ENCODE measurements at regions of chr9 and their contacts with region 1.

Region 1: DNA sequence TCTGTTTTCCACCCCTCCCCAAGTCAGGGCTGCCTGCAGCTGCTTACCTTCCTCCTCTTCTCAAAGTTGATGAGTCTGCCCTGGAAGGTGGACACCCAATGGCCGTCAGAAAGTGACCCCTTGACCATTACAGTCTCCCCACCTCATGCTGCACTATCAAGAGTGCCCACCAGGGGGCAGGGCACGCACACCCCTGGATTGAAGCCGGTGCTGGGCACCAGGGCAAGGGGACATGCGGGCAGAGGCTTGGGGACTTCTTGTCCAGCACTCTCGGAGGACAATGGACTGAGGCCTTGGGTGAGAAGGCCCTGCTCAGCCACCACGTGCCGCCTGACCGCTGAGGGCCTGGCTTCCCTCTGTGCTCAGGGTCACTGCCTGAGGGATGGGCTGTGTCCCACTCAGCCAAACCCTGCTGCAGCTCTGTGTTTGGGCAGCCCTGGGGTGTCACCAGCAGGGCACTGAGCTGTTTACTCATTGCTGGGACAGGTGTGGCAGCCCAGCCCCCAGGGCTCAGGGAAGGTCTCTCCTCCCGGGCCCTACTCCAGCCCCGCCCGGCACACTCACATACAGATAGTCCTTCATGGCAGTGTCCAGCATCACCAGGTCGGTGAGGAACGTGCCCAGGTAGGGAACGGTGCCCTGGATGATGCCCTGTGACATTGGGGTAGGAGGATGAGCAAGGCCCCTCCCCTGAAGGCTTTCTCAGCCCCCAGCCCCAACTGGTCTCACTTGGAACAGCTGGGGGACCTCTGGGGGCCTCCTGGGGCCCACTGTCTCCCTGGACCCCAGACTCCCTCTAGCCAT is 17.7 kb downstream of the RALGDS start:
- DNase-seq: peak; percentile 67
- H3K4me3 Mint-ChIP-seq: no peak overlapping the region
- H3K27ac Mint-ChIP-seq: peak overlapping the region; percentile 54
- H3K4me1 Mint-ChIP-seq: peaks cover 4% of the 10 kb centered on the region
- H3K27me3 Mint-ChIP-seq: no peaks in the 10 kb centered on the region

Region 2: GRCh38 chr9:133115448-133116345 is 12.3 kb after region 1 on chr9:
- CTCF ChIA-PET with region 1: interaction called, 24 read pairs
- DNase-seq: peak; percentile 54
- H3K4me3 Mint-ChIP-seq: no peak overlapping the region
- H3K27ac Mint-ChIP-seq: peak overlapping the region; percentile 77
- H3K4me1 Mint-ChIP-seq: peaks cover 74% of the 10 kb centered on the region
- H3K27me3 Mint-ChIP-seq: no peaks in the 10 kb centered on the region

Region 3: DNA sequence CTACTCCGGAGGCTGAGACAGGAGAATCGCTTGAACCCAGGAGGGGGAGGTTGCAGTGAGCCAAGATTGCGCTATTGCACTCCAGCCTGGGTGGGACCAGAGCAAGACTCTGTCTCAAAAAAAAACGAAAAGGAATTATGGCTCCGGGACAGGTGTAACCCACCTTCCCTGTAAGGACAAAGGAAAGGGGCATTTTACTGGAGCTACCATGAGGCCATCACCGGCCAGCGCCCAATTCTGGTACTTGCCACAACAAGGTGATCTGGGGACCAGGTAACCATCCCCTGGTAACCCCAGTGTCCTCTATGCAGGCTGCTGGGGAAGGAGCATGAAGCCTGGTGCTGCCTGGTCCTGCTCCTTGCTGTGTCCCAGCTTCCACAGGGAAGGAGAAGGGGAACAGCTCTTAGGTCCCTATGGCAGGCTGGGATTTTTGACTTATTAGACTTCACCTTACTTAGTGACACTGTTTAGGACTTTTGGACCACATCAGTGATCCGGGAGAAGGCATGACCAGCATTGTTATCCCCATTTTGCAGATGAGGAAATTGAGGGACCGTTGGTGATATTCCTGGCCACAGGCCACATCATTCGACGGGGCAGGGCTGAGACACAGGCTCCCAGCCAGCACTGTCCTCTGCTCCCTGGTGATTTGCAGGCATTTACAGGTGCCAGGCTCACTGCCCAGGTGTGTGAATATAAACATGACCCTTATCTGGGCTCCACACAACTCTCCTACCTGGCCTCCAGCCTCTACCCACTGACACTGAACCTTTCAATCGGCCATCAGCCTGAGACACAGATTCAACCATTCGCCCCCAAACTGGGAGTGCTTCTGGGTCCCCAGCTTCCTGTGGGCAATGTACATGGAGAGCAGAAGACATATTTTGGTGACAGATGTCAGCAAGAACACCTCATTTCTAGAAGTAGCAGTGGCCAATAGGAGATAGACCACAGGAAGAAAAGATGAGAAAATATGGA is 198.2 kb after region 1 on chr9:
- CTCF ChIA-PET with region 1: no interaction called
- DNase-seq: no peak
- H3K4me3 Mint-ChIP-seq: no peak overlapping the region
- H3K27ac Mint-ChIP-seq: no peak overlapping the region
- H3K4me1 Mint-ChIP-seq: no peaks in the 10 kb centered on the region
- H3K27me3 Mint-ChIP-seq: peaks cover 18% of the 10 kb centered on the region

Measured in activated naive CD4-positive, alpha-beta T cell treated with anti-CD3 and anti-CD28 coated beads, Interleukin-2, amount 10 ng/mL, durations not matched to agents 7 days and 5 days (primary cell).